Prostate gland (tissue), 2 donors: ENCODE measurements at regions of chr16 and their contacts with region 1.

Region 1: GRCh38 chr16:51982715-51983680 is 563.9 kb downstream of the TOX3 start:
- DNase-seq: peak; percentile 61
- H3K4me3 ChIP-seq: no peak overlapping the region
- H3K27ac ChIP-seq: no peak overlapping the region
- H3K4me1 ChIP-seq: no peaks in the 10 kb centered on the region
- H3K27me3 ChIP-seq: no peaks in the 10 kb centered on the region
- CTCF ChIP-seq: peak; percentile 42 to 88 (median 81)
- POLR2A ChIP-seq: no peak

Region 2: DNA sequence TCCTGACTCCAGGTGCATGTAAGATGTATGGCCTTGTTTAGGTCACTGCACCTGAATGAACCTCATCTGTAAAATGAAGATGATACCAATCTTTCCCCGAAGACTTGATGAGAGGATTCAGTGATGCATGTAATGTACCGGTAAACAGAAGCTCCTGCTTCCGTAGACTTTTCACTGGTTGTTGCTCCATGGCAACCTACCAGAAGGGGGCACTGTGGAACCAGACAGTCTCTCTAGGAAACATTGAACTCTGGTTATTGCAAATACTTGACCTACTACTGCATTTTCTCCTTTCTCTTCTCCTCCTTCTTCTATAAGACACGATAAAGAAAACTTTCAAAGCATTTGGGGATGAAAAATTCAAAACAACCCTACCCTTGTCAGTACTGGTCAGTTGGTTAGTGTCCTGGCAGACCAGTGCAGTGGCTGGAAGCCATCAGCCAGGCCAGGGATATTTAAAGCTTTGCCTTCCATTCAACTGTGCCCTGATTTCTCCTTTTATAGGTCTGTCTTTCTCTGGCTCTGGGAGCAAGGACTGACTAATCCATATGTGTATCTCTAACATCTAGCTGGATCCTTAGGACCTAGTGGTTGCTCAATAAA is 164.6 kb before region 1 on chr16:
- intact Hi-C with region 1: loop called (anchors 2 kb)
- DNase-seq: peak; percentile 43
- H3K4me3 ChIP-seq: no peak overlapping the region
- H3K27ac ChIP-seq: no peak overlapping the region
- H3K4me1 ChIP-seq: no peaks in the 10 kb centered on the region
- H3K27me3 ChIP-seq: no peaks in the 10 kb centered on the region
- CTCF ChIP-seq: peak; percentile 14 to 60 (median 44)
- POLR2A ChIP-seq: no peak